ENCODE measurements at regions of chr3 and their contacts with region 1.

Region 1: DNA sequence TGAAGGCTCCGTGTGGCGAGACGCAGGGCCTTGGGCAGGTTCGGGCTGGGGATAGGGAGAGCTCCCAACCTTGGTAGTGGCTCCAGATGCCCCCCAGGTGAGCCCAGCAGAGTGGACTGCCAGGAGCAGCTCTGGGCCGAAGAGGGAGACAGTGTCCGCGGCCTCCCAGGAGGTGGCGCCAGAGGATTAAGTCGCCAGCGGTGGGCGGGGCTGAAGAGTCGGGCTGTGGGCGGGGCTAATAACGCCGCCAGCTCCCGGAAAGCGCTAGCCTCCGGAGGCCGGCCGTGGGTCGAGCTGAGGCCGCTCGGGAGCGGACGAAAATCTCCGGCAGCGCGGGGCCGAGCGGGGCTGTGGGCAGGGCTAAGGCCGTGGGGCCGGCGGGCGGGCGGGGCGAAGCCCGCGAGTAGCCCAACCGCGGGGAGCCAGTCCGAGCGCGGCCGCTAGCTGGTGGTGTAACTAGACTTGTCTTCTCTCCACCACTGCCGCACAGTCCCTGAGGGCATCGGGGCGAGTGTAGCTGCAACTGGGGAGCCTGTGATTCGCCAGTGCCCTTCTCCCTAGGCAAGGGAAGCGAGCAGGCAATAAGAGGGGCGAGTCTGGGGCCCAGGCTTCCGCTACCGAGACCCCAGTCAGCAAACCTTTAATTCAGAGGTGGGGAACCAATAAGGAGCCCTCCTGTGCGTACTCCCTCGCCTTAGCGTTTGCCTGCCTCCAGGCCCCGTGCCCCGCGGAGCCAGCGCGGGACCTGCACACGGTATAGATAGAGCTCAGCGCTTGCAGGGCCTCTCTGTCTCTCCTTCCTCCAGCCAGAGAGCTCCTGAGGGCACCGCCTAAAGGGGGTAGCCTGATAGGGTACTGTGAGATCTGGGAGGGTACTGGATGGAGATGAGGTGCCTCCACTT is 14.4 kb upstream of the BSN start:
- DNase-seq: peak; percentile 93

Region 2: DNA sequence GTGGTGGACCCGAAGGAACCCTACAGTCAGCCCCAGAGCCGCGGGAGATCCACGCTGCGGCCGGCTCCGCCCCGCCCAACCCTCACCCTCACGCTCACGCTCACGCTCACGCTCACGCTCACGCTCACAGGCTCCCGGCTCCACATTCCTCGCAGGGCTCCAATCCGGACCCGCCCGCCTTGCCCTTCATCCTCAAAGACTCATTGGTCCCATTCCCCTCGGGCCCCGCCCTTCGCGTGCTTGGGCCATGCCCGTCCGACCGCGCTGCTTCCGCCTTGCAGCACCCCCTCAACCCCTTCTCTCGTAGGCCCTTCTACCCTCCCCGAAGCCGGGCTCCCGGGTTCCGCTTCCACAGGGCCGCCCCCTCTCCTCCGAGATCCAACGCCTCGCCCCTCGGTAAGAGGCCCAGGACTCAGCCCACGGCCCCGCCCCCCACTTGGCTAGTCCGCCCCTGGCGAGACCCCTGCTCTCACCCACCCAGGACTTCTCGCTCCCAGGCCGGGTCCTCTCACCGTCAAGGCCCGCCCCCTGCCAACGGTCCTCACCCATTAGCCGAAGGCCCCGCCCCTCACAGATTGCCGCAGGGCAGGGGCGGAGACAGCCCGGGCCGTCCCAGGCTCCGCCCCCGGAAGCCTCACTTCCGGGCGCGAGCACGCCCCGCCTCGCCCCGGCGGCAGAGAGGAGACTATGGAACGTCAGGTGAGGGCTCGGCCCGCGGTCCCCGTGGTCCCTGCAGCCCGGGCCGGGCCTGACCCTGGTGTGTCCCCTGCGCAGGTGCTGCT is 134.0 kb after region 1 on chr3 and contains the start of gene APEH:
- in situ Hi-C with region 1: loop called (anchors 10 kb)
- DNase-seq: peak; percentile 99

Measured in KBM-7 (cell line).